HAP-1 (cell line): ENCODE measurements at regions of chr15 and their contacts with region 1.

Region 1: DNA sequence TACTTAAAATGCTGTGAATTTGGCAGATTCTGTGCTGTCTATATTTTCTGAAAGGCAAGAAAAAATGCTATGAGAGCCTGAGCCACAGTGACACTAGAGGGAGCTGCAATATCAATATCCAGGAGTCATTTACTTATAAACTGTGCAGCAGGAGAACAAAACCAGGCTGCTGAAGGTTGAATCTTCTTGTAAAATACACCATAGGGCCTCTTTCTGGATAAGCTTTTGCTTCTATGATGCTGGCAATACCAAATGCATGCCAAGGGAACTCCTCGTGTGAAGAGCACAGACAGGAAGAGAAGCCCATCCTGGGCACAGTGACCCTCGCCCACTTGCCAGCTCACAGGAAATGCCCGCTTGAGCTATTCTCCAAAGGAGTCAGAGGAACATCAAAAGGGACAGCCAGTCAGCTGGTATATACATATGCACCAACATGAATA is 48.0 kb upstream of the TSPAN3 start:
- DNase-seq: peak; percentile 66 to 83
- H3K4me3 ChIP-seq: no peak overlapping the region
- H3K4me1 ChIP-seq: no peaks in the 10 kb centered on the region
- H3K27me3 ChIP-seq: no peaks in the 10 kb centered on the region

Region 2: GRCh38 chr15:77496710-77497103 is 377.8 kb after region 1 on chr15:
- in situ Hi-C with region 1: loop called (anchors 5 kb)
- DNase-seq: peak; percentile 93 to 95
- H3K4me3 ChIP-seq: no peak overlapping the region
- H3K4me1 ChIP-seq: peaks cover 10% of the 10 kb centered on the region
- H3K27me3 ChIP-seq: no peaks in the 10 kb centered on the region

Region 3: GRCh38 chr15:77870195-77871065 is 751.5 kb after region 1 on chr15:
- in situ Hi-C with region 1: loop called (anchors 10 kb)
- DNase-seq: peak; percentile 71 to 94
- H3K4me3 ChIP-seq: no peak overlapping the region
- H3K4me1 ChIP-seq: no peaks in the 10 kb centered on the region
- H3K27me3 ChIP-seq: no peaks in the 10 kb centered on the region; the same call in 1 of the 2 replicates